ENCODE measurements at regions of chr12 and their contacts with region 1.

Region 1: GRCh38 chr12:55926738-55927587 is 731 bp downstream of the PYM1 start:
- DNase-seq: peak; percentile 96
- H3K4me3 Mint-ChIP-seq: peak overlapping the region; percentile 96
- H3K27ac Mint-ChIP-seq: peak overlapping the region; percentile 98
- H3K4me1 Mint-ChIP-seq: peaks cover 43% of the 10 kb centered on the region
- H3K27me3 Mint-ChIP-seq: no peaks in the 10 kb centered on the region

Region 2: DNA sequence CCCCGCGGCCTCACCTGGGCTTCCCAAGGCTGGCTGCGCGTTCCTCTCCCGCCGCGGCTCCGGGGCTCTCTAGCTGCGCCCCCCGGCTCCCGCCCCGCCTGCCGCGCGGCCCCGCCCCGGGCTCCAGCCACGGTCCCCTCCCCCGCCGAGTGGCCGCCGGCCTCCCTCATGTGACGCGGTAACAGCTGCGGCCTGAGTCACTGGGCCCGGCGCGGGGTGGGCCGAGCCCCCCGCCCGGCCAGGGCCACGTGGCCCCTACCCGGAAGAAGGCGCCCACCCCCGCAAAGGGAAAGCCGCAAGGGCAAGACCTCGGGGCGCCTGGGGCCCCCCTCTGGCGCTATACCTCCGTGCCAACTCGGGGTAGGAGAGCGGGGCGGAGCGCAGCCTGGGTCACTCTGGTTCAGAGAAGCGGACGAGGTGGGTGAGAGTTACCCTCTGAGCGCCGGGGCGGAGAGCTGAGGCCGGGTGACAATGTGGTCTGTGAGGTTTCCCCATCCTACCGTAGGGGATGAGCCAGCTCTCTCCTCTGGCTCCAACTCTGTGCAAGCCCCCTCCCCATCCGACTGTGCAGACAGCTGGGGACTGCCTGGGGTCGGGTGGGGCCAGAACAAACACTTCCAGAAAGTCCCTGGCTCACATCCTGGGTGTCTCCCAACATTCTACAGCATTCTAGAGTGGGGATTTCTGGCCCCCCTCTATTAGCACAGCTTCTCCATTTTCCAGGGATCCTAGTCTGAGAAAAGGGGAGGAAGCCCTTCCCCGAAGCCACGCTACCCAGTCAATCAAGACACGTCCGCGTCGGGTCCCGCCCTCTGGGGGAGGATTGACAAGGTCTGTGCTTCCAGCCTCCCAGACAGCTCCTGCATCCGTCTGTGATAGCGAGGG is 197.8 kb before region 1 on chr12 and contains the start of gene CD63:
- CTCF ChIA-PET with region 1: no interaction called
- POLR2A ChIA-PET with region 1: interaction called, 10 read pairs
- intact Hi-C with region 1: no loop called
- DNase-seq: peak; percentile 89
- H3K4me3 Mint-ChIP-seq: peak within 1 kb of the TSS; percentile 87
- H3K27ac Mint-ChIP-seq: peak within 1 kb of the TSS; percentile 89
- H3K4me1 Mint-ChIP-seq: peaks cover 36% of the 10 kb centered on the region
- H3K27me3 Mint-ChIP-seq: no peaks in the 10 kb centered on the region
- total RNA-seq, gene CD63: 204 to 210 TPM

Region 3: DNA sequence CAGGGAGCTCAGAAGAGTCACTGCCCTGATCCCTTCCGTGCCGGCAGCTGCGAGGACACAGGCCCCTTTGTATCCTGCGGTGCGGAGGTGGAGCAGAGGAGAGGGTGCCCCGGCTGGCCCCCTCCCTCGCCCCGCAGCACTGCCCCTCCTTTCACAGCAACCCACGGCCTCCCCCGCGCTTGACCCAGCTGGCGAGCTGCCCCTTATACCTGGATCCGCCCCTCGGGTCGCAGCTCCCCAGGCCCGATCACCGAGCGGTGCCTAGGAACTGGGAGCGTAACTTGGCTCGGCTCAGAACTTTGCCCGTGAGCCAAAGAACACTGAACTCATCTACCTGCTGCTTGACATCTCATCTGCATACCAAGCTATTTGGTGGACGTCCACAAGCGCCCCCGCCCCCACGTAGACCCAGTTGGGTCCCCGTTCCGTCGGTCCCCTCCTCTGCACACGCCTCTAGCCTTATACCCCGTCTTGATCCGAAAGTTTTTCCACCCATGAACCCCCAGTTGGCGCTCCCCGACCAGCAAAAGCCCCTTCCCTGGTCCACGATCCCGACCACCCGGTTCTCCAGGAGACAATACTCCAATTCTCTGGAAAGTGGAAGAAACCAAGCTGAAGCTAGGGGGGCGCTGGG is 96.9 kb before region 1 on chr12:
- CTCF ChIA-PET with region 1: interaction called, 17 read pairs
- POLR2A ChIA-PET with region 1: interaction called, 27 read pairs
- intact Hi-C with region 1: loop called (anchors 1 kb)
- DNase-seq: no peak
- H3K4me3 Mint-ChIP-seq: peak overlapping the region; percentile 95
- H3K27ac Mint-ChIP-seq: peak overlapping the region; percentile 82
- H3K4me1 Mint-ChIP-seq: peaks cover 39% of the 10 kb centered on the region
- H3K27me3 Mint-ChIP-seq: no peaks in the 10 kb centered on the region

Region 4: GRCh38 chr12:55891310-55891709 is 35.7 kb before region 1 on chr12:
- CTCF ChIA-PET with region 1: no interaction called
- POLR2A ChIA-PET with region 1: no interaction called
- intact Hi-C with region 1: no loop called
- DNase-seq: no peak
- H3K4me3 Mint-ChIP-seq: no peak overlapping the region
- H3K27ac Mint-ChIP-seq: no peak overlapping the region
- H3K4me1 Mint-ChIP-seq: no peaks in the 10 kb centered on the region
- H3K27me3 Mint-ChIP-seq: no peaks in the 10 kb centered on the region

Region 5: GRCh38 chr12:55915482-55915859 is 11.5 kb before region 1 on chr12:
- CTCF ChIA-PET with region 1: interaction called, 32 read pairs
- POLR2A ChIA-PET with region 1: interaction called, 3 read pairs
- intact Hi-C with region 1: no loop called
- DNase-seq: no peak
- H3K4me3 Mint-ChIP-seq: no peak overlapping the region
- H3K27ac Mint-ChIP-seq: peak overlapping the region; percentile 8
- H3K4me1 Mint-ChIP-seq: peaks cover 37% of the 10 kb centered on the region
- H3K27me3 Mint-ChIP-seq: no peaks in the 10 kb centered on the region

Region 6: DNA sequence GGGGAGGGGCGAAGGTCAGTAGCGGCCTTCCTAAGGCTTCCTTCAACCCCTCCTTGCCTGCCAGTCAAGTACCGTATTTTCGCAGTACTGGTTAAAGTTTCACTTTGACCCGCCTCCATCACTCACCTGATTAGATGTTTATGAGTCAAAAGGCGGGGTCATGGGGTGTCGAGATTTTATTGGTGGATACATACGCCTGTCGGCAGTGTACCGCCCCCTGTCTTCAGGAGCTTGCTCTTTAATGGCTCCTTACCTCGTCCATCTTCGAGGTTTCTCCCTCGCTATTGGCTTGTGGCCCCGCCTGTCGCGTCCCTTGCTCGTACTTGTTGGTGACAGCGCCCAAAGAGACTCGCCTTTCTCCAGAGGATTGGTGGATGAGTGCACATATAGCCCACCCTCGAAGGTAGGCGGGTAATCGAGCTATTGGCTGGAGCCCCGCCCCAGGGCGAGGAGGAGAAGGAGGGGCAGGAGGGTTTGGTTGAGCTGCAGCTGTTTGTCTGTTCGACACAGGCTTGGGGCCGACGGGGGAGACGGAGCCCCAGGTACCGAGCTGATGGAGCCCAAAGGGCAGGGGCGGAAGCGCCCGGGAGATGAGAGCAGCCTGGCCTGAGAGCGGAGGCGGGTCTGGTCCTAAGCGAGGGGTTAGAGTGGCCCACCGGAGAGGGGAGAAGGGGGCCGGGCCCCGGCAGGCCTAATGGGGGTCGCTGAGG is 46.8 kb after region 1 on chr12 and contains the start of gene RAB5B:
- CTCF ChIA-PET with region 1: interaction called, 3 read pairs
- POLR2A ChIA-PET with region 1: interaction called, 8 read pairs
- intact Hi-C with region 1: loop called (anchors 1 kb)
- DNase-seq: peak; percentile 99
- H3K4me3 Mint-ChIP-seq: no peak within 1 kb of the TSS
- H3K27ac Mint-ChIP-seq: no peak within 1 kb of the TSS
- H3K4me1 Mint-ChIP-seq: peaks cover 19% of the 10 kb centered on the region
- H3K27me3 Mint-ChIP-seq: no peaks in the 10 kb centered on the region
- total RNA-seq, gene RAB5B: 44.8 to 46.4 TPM

Measured in activated CD4-positive, alpha-beta memory T cell treated with anti-CD3 and anti-CD28 coated beads for 36 hours (primary cell).